Activated CD4-positive, alpha-beta T cell treated with anti-CD3 and anti-CD28 coated beads, Interleukin-2, amount 10 ng/mL, durations not matched to agents 24 days and 14 days (primary cell): ENCODE measurements at regions of chr17 and their contacts with region 1.

Region 1: GRCh38 chr17:42248351-42249179 is 27.6 kb downstream of the STAT5B start:
- DNase-seq: peak; percentile 94
- H3K4me3 Mint-ChIP-seq: peak overlapping the region; percentile 87
- H3K27ac Mint-ChIP-seq: peak overlapping the region; percentile 98
- H3K4me1 Mint-ChIP-seq: peaks cover 58% of the 10 kb centered on the region
- H3K27me3 Mint-ChIP-seq: no peaks in the 10 kb centered on the region

Region 2: GRCh38 chr17:42266918-42267778 is 18.6 kb after region 1 on chr17:
- intact Hi-C with region 1: loop called (anchors 1 kb)
- DNase-seq: peak; percentile 85
- H3K4me3 Mint-ChIP-seq: peak overlapping the region; percentile 76
- H3K27ac Mint-ChIP-seq: peak overlapping the region; percentile 98
- H3K4me1 Mint-ChIP-seq: peaks cover 52% of the 10 kb centered on the region
- H3K27me3 Mint-ChIP-seq: no peaks in the 10 kb centered on the region

Region 3: DNA sequence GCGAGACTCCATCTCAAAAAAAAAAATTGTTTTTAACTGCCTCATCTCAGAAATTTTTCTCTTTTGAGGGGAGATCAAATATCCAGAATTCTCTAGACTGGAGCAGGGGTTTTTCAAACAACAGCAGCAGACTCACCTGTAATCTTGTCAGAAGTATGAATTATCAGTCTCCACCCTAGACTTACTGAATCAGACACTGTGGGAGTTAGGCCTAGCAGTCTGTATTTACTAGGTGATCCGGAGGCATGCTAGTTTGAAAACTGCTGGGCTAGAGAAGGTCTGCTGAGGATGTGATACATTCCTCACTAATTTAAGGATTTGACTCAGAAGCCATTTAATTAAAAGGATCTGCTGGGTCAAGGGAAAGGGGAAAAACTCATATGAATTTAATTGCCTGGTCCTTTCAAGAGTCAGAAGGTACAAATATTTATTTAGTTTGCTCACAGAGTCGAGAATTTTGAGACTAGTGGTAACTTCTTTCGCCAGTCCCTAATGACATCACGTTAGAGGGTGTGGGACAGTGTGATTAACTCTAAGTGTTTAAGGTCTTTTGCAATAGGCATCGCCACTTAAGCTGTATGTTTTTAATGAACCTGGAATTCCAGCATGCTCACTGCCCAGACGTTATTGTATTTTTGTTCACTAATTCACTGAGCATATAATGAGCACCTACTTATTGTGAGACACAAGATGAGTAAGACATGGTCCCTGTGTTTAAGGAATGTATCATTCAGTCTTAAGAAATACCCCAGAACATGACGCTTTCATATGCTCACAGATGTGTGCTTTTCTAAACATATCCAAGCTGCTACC is 224.3 kb after region 1 on chr17:
- intact Hi-C with region 1: no loop called
- DNase-seq: no peak
- H3K4me3 Mint-ChIP-seq: no peak overlapping the region
- H3K27ac Mint-ChIP-seq: no peak overlapping the region
- H3K4me1 Mint-ChIP-seq: peaks cover 7% of the 10 kb centered on the region
- H3K27me3 Mint-ChIP-seq: no peaks in the 10 kb centered on the region